Mammary epithelial cell (primary cell): ENCODE measurements at regions of chr22 and their contacts with region 1.

Region 1: GRCh38 chr22:47996446-47996857 is 1234.0 kb downstream of the TBC1D22A start:
- DNase-seq: no peak
- H3K4me3 ChIP-seq: no peak overlapping the region
- H3K27ac ChIP-seq: no peak overlapping the region
- H3K4me1 ChIP-seq: no peaks in the 10 kb centered on the region
- H3K27me3 ChIP-seq: no peaks in the 10 kb centered on the region
- CTCF ChIP-seq: no peak

Region 2: DNA sequence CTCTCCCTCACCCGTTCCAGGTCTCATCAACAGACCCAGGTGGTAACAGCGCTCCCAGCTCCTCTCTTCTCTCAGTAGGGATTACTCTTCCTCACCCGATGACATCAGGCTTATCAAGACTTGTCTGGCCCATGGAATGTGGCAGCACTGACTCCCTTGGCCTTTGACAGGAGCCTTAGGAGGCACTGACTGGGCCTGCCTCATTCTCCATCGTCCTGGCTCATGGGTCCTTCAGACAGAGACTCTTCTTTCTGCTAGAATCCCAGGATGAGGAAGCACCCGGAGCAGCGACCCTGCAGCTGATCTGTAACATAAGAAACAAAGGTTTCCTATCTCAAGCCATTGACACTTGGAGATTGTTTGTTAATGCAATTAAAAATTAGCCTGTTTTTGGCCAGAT is 170.4 kb before region 1 on chr22:
- CTCF ChIA-PET with region 1: no interaction called
- dilution Hi-C with region 1: no loop called
- in situ Hi-C with region 1: no loop called
- intact Hi-C with region 1: no loop called
- DNase-seq: no peak
- H3K4me3 ChIP-seq: no peak overlapping the region
- H3K27ac ChIP-seq: no peak overlapping the region
- H3K4me1 ChIP-seq: no peaks in the 10 kb centered on the region
- H3K27me3 ChIP-seq: no peaks in the 10 kb centered on the region
- CTCF ChIP-seq: no peak

Region 3: GRCh38 chr22:47901911-47902310 is 94.5 kb before region 1 on chr22:
- CTCF ChIA-PET with region 1: no interaction called
- dilution Hi-C with region 1: loop called (anchors 5 kb)
- in situ Hi-C with region 1: no loop called
- intact Hi-C with region 1: no loop called
- DNase-seq: no peak
- H3K4me3 ChIP-seq: no peak overlapping the region
- H3K27ac ChIP-seq: no peak overlapping the region
- H3K4me1 ChIP-seq: no peaks in the 10 kb centered on the region
- H3K27me3 ChIP-seq: no peaks in the 10 kb centered on the region
- CTCF ChIP-seq: no peak

Region 4: GRCh38 chr22:47944941-47945340 is 51.5 kb before region 1 on chr22:
- CTCF ChIA-PET with region 1: no interaction called
- dilution Hi-C with region 1: loop called (anchors 5 kb)
- in situ Hi-C with region 1: no loop called
- intact Hi-C with region 1: no loop called
- DNase-seq: no peak
- H3K4me3 ChIP-seq: no peak overlapping the region
- H3K27ac ChIP-seq: no peak overlapping the region
- H3K4me1 ChIP-seq: no peaks in the 10 kb centered on the region
- H3K27me3 ChIP-seq: no peaks in the 10 kb centered on the region
- CTCF ChIP-seq: no peak

Region 5: DNA sequence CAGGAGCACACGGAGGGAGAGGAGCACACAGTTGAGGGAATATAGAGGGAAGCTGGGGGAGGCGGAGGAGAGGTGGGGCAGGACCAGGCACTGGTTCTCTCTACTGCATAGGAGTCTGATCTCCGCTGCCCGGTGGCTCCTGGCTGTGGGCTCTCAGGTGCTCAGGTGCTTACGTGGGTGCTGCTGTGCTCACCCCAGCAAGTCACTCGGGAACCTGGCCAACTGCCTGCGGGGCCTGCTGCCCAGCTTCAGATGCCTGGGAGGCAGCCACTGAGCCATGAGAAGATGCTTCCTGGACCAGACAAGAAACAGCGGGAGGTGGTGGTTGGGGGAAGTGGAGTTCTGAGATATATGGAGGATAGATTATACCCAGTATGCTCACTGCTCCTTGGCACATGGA is 69.4 kb after region 1 on chr22:
- CTCF ChIA-PET with region 1: no interaction called
- dilution Hi-C with region 1: no loop called
- in situ Hi-C with region 1: no loop called
- intact Hi-C with region 1: no loop called
- DNase-seq: no peak
- H3K4me3 ChIP-seq: no peak overlapping the region
- H3K27ac ChIP-seq: no peak overlapping the region
- H3K4me1 ChIP-seq: no peaks in the 10 kb centered on the region
- H3K27me3 ChIP-seq: no peaks in the 10 kb centered on the region
- CTCF ChIP-seq: no peak